A549 (cell line): ENCODE measurements at regions of chr12 and their contacts with region 1.

Region 1: DNA sequence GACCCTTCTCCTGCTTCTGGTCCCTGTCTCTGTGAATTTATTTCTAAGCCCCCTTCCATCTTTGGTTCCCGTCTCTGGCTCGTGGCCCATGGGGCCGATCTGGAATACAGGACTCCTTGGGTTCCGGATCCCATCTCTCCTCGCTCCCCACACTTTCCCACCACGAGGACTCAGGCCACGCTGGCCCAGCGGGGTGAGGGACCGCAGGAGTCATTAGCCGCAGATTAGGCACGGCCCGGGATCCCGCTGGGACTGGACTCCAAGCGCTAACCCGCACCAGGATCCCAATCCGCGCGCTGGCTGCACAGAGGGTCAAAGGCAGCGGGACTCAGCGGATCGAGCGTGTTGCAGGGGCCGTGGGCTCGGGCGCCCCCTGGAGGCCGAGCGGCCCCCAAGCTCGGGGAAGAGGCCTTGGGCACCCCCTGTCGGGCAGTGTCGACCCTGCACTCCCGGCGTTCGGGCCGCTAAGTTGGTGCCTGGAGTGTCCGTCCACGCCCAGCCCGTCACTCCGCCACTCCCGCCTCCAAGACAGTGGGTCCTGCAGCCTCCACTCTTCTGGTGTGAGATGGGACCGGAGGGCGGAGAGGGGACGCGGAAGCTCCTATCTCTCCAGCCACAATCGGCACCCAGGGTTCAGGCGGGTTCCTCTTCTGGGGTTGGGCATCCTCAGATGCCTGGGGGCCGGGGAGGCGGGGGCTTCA is 9.5 kb downstream of the SHMT2 start:
- DNase-seq: peak; percentile 88 to 92
- ATAC-seq: peak; percentile 49 to 73
- H3K4me3 ChIP-seq: peak overlapping the region; percentile 55
- H3K27ac ChIP-seq: peak overlapping the region; percentile 75 to 93
- H3K4me1 ChIP-seq: peaks cover 26% of the 10 kb centered on the region; the same call in 2 of the 3 replicates
- CTCF ChIP-seq: peak; percentile 100
- EP300 ChIP-seq: no peak
- POLR2A ChIP-seq: no peak
- RAD21 ChIP-seq: peak; percentile 79 to 88

Region 2: DNA sequence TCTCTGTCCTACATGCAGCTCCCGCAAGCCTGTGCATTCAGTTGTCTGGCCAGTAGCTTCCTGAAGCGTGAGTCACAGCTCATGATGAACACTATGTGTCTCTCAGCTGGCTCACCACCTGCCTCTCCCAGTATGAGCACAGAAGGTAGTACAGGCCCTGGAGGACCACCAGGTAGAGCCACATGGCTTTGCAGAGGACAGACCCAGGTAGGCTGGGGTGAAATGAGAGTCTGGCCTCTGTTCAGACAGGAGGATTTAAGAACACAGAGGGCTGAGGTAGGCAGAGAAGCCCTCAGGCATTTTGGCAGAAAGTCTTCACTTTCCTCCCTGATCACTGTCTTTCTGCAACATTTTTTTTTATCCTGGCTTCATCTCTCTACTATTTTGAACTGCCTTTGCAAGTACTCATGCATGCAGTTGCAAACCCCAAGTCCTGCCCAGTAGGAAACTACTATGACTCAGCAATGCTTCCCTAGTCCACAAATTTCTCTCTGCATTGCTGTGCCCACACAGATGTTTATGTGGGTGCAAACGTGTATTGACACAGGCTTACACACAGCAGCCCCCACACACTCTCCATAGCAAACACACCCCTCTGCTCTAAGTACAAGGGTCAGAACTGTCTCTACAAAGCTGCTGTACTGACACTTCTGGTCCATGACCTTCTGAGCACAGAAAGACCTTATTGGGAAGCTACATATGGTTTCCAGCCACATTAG is 297.5 kb before region 1 on chr12:
- CTCF ChIA-PET with region 1: no interaction called
- POLR2A ChIA-PET with region 1: no interaction called
- DNase-seq: peak; percentile 53 to 75
- ATAC-seq: peak; percentile 99
- H3K4me3 ChIP-seq: no peak overlapping the region
- H3K27ac ChIP-seq: peak overlapping the region; percentile 88 to 89
- H3K4me1 ChIP-seq: peaks cover 15% of the 10 kb centered on the region
- CTCF ChIP-seq: no peak
- EP300 ChIP-seq: no peak
- POLR2A ChIP-seq: no peak
- RAD21 ChIP-seq: no peak

Region 3: GRCh38 chr12:57213058-57213715 is 25.8 kb before region 1 on chr12:
- CTCF ChIA-PET with region 1: interaction called, 615 read pairs
- POLR2A ChIA-PET with region 1: interaction called, 12 read pairs
- DNase-seq: peak; percentile 89 to 94
- ATAC-seq: peak; percentile 51 to 75
- H3K4me3 ChIP-seq: no peak overlapping the region
- H3K27ac ChIP-seq: peak overlapping the region in 1 of 2 experiments; percentile 67; a peak in 4 of 6 replicates
- H3K4me1 ChIP-seq: peaks cover 31% of the 10 kb centered on the region
- CTCF ChIP-seq: peak; percentile 90
- EP300 ChIP-seq: no peak
- POLR2A ChIP-seq: no peak
- RAD21 ChIP-seq: peak; percentile 78 to 85

Region 4: GRCh38 chr12:57248934-57249742 is 10.1 kb after region 1 on chr12:
- CTCF ChIA-PET with region 1: interaction called, 43 read pairs
- POLR2A ChIA-PET with region 1: interaction called, 4 read pairs
- DNase-seq: no peak
- ATAC-seq: no peak
- H3K4me3 ChIP-seq: no peak overlapping the region
- H3K27ac ChIP-seq: no peak overlapping the region
- H3K4me1 ChIP-seq: peaks cover 4% of the 10 kb centered on the region; the same call in 1 of the 3 replicates
- CTCF ChIP-seq: no peak
- EP300 ChIP-seq: no peak
- POLR2A ChIP-seq: no peak
- RAD21 ChIP-seq: no peak

Region 5: GRCh38 chr12:57254506-57255280 is 15.7 kb after region 1 on chr12:
- CTCF ChIA-PET with region 1: interaction called, 131 read pairs
- POLR2A ChIA-PET with region 1: interaction called, 4 read pairs
- DNase-seq: no peak
- ATAC-seq: no peak; a peak in 1 of 6 replicates
- H3K4me3 ChIP-seq: no peak overlapping the region
- H3K27ac ChIP-seq: no peak overlapping the region
- H3K4me1 ChIP-seq: no peaks in the 10 kb centered on the region
- CTCF ChIP-seq: no peak
- EP300 ChIP-seq: no peak
- POLR2A ChIP-seq: no peak
- RAD21 ChIP-seq: no peak

Region 6: GRCh38 chr12:57261428-57261865 is 22.4 kb after region 1 on chr12:
- CTCF ChIA-PET with region 1: interaction called, 131 read pairs
- POLR2A ChIA-PET with region 1: no interaction called
- DNase-seq: no peak
- ATAC-seq: no peak
- H3K4me3 ChIP-seq: no peak overlapping the region
- H3K27ac ChIP-seq: no peak overlapping the region
- H3K4me1 ChIP-seq: 0 out of 3 replicates have a peak, but pooled peaks cover 3% of the 10 kb centered on the region
- CTCF ChIP-seq: no peak
- EP300 ChIP-seq: no peak
- POLR2A ChIP-seq: no peak
- RAD21 ChIP-seq: no peak